GM12878 (cell line): ENCODE measurements at regions of chr6 and their contacts with region 1.

Region 1: DNA sequence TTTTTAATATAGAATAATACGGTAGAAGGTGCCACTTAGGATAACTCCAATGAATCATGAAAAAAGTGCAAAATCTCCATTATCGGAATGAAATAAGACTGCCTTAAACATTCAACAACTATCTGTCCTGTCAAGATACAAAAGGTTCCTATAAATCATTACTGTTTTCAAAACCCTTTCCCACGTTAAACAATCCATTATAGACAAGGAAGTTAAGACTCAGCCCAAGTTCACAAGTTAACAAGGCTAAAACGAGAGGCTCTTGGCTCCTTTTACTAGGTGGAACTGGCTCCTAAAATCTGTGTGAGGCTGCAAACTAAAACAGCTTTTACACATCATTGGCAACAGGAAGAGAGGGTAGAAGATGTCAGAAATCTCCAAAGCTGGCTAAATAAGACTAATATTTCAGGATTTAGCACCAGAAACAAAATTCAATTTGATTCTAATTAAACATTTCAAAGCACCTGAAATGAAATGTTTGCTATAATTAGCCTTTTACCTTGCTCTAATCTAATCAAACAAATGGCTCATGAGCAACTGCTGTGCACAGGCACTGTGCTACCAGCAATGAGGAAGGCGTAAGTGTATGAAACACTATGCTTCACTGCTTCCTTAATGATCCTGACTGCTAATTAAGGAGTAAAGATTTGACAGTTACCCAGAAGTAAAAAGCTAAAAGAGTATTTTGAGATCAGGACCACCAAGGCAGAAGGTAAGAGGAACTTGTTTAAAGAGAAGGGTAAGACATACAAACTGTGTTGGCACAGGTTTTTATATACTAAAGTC is 109.7 kb downstream of the DST start:
- DNase-seq: no peak
- ATAC-seq: peak; percentile 86
- H3K4me3 ChIP-seq: no peak overlapping the region
- H3K27ac ChIP-seq: no peak overlapping the region
- H3K4me1 ChIP-seq: no peaks in the 10 kb centered on the region
- H3K27me3 ChIP-seq: no peaks in the 10 kb centered on the region
- CTCF ChIP-seq: no peak
- EP300 ChIP-seq: no peak
- POLR2A ChIP-seq: no peak
- RAD21 ChIP-seq: no peak

Region 2: DNA sequence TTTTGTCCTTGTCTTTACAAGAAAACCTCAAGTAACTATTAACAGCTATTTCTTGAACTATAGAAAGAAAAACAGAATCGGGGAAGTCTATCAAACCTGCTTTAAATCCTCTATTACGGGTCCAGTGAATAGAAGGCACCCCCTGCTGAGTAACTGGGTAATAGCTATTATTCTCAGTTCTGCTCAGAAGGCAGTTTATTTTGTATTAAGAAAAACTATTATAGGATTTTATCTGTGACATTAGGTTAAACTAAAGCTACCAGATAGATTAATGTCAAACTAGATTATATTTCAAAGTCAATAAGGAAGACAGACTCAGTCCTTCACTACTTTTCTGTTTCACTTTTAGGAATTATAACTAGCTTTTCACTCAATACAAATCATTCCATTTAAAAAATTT is 16.1 kb after region 1 on chr6:
- CTCF ChIA-PET with region 1: interaction called, 12 read pairs
- POLR2A ChIA-PET with region 1: no interaction called
- RAD21 ChIA-PET with region 1: interaction called, 5 read pairs
- SMC1A ChIA-PET with region 1: interaction called, 14 read pairs
- in situ Hi-C with region 1: no loop called
- intact Hi-C with region 1: no loop called
- DNase-seq: no peak
- ATAC-seq: peak; percentile 46; the same call in 1 of the 3 replicates
- H3K4me3 ChIP-seq: no peak overlapping the region
- H3K27ac ChIP-seq: no peak overlapping the region
- H3K4me1 ChIP-seq: peaks cover 9% of the 10 kb centered on the region; the same call in 1 of the 2 replicates
- H3K27me3 ChIP-seq: no peaks in the 10 kb centered on the region
- CTCF ChIP-seq: peak; percentile 3 to 26 (median 24); a peak in 2 of 6 replicates
- EP300 ChIP-seq: no peak
- POLR2A ChIP-seq: no peak
- RAD21 ChIP-seq: peak; percentile 47